ENCODE measurements at regions of chr7 and their contacts with region 1.

Region 1: GRCh38 chr7:1940402-1940786 is 270.3 kb downstream of the ELFN1 start:
- DNase-seq: peak; percentile 94 to 97 (median 95)
- H3K4me3 ChIP-seq: peak overlapping the region; percentile 79 to 97
- H3K4me3 Mint-ChIP-seq: peak overlapping the region; percentile 92 to 98 (median 96)
- H3K27ac ChIP-seq: peak overlapping the region; percentile 93
- H3K27ac Mint-ChIP-seq: peak overlapping the region; percentile 97 to 99 (median 99)
- H3K4me1 ChIP-seq: peaks cover 72% of the 10 kb centered on the region
- H3K4me1 Mint-ChIP-seq: peaks cover 33 to 77% (median 51%) of the 10 kb centered on the region in 4 donors
- H3K27me3 ChIP-seq: no peaks in the 10 kb centered on the region
- H3K27me3 Mint-ChIP-seq: no peaks in the 10 kb centered on the region

Region 2: GRCh38 chr7:1919539-1920265 is 20.7 kb before region 1 on chr7:
- CTCF ChIA-PET with region 1: interaction called, 3 read pairs
- POLR2A ChIA-PET with region 1: interaction called, 102 read pairs
- intact Hi-C with region 1: loop called (anchors 1 kb)
- DNase-seq: peak in 2 of 5 donors; percentile 24 to 29
- H3K4me3 ChIP-seq: peak overlapping the region; percentile 42 to 53
- H3K4me3 Mint-ChIP-seq: peak overlapping the region; percentile 84 to 91 (median 89)
- H3K27ac ChIP-seq: no peak overlapping the region
- H3K27ac Mint-ChIP-seq: peak overlapping the region; percentile 77 to 93 (median 89)
- H3K4me1 ChIP-seq: peaks cover 72% of the 10 kb centered on the region
- H3K4me1 Mint-ChIP-seq: peaks cover 38 to 72% (median 50%) of the 10 kb centered on the region in 4 donors
- H3K27me3 ChIP-seq: no peaks in the 10 kb centered on the region
- H3K27me3 Mint-ChIP-seq: no peaks in the 10 kb centered on the region

Region 3: DNA sequence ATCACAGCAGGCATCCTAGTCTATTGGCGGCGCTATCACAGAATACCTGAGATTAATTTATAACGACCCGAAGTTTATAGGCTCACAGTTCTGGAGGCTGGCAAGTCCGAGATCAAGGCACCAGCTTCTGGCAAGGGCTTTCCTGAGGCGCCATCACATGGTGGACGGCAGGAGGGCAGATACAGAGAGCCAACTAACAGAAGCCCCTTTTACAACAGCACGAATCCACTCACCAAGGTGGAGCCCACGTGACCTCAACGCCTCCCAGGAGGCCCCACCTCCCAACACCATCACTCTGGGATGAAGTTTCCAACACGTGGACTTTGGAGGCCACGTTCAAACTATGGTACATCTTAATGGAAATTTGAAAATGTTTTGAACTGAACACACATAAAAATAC is 15.0 kb before region 1 on chr7:
- CTCF ChIA-PET with region 1: interaction called, 14 read pairs
- POLR2A ChIA-PET with region 1: interaction called, 102 read pairs
- intact Hi-C with region 1: loop called (anchors 1 kb)
- DNase-seq: peak in 1 of 5 donors; percentile 24
- H3K4me3 ChIP-seq: no peak overlapping the region
- H3K4me3 Mint-ChIP-seq: peak overlapping the region; percentile 27 to 79 (median 62)
- H3K27ac ChIP-seq: peak overlapping the region; percentile 20
- H3K27ac Mint-ChIP-seq: peak overlapping the region; percentile 45 to 96 (median 92)
- H3K4me1 ChIP-seq: peaks cover 77% of the 10 kb centered on the region
- H3K4me1 Mint-ChIP-seq: peaks cover 56 to 82% (median 67%) of the 10 kb centered on the region in 4 donors
- H3K27me3 ChIP-seq: no peaks in the 10 kb centered on the region
- H3K27me3 Mint-ChIP-seq: no peaks in the 10 kb centered on the region

Region 4: GRCh38 chr7:1951159-1951536 is 10.8 kb after region 1 on chr7:
- CTCF ChIA-PET with region 1: no interaction called
- POLR2A ChIA-PET with region 1: interaction called, 14 read pairs
- intact Hi-C with region 1: no loop called
- DNase-seq: no peak
- H3K4me3 ChIP-seq: no peak overlapping the region
- H3K4me3 Mint-ChIP-seq: peak overlapping the region in 3 of 8 donors; percentile 34 to 54 (median 49)
- H3K27ac ChIP-seq: no peak overlapping the region
- H3K27ac Mint-ChIP-seq: peak overlapping the region in 2 of 7 donors; percentile 22 to 70
- H3K4me1 ChIP-seq: peaks cover 15% of the 10 kb centered on the region
- H3K4me1 Mint-ChIP-seq: peaks cover 6 to 17% (median 9%) of the 10 kb centered on the region in 4 donors
- H3K27me3 ChIP-seq: no peaks in the 10 kb centered on the region
- H3K27me3 Mint-ChIP-seq: no peaks in the 10 kb centered on the region

Region 5: DNA sequence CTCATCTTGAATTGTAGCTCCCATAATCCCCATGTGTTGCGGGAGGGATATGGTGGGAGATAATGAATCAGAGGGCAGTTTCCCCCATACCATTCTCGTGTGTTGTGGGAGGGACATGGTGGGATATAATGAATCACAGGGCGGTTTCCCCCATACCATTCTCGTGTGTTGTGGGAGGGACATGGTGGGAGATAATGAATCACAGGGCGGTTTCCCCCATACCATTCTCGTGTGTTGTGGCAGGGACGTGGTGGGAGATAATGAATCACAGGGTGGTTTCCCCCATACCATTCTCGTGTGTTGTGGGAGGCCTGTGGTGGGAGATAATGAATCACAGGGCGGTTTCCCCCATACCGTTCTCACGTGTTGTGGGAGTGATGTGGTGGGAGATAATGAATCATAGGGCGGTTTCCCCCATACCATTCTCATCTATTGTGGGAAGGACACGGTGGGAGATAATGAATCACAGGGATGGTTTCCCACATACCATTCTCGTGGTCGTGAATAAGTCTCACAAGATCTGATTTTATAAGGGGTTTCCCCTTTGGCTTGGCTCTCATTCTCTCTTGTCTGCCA is 21.4 kb after region 1 on chr7:
- CTCF ChIA-PET with region 1: no interaction called
- POLR2A ChIA-PET with region 1: no interaction called
- intact Hi-C with region 1: loop called (anchors 1 kb)
- DNase-seq: peak; percentile 46 to 82 (median 50)
- H3K4me3 ChIP-seq: no peak overlapping the region
- H3K4me3 Mint-ChIP-seq: peak overlapping the region in 3 of 8 donors; percentile 32 to 68 (median 49)
- H3K27ac ChIP-seq: no peak overlapping the region
- H3K27ac Mint-ChIP-seq: peak overlapping the region; percentile 46 to 90 (median 79)
- H3K4me1 ChIP-seq: no peaks in the 10 kb centered on the region
- H3K4me1 Mint-ChIP-seq: peaks cover 0 to 16% (median 10%) of the 10 kb centered on the region in 4 donors
- H3K27me3 ChIP-seq: no peaks in the 10 kb centered on the region
- H3K27me3 Mint-ChIP-seq: peaks cover 0 to 1% of the 10 kb centered on the region in 2 donors

Region 6: GRCh38 chr7:2232766-2233520 is 292.5 kb after region 1 on chr7 and contains the start of gene MAD1L1:
- CTCF ChIA-PET with region 1: no interaction called
- POLR2A ChIA-PET with region 1: no interaction called
- intact Hi-C with region 1: loop called (anchors 5 kb)
- DNase-seq: peak; percentile 86 to 88 (median 88)
- H3K4me3 ChIP-seq: peak within 1 kb of the TSS; percentile 95 to 98
- H3K4me3 Mint-ChIP-seq: peak within 1 kb of the TSS; percentile 87 to 99 (median 94)
- H3K27ac ChIP-seq: peak within 1 kb of the TSS; percentile 70
- H3K27ac Mint-ChIP-seq: peak within 1 kb of the TSS; percentile 76 to 97 (median 90)
- H3K4me1 ChIP-seq: peaks cover 32% of the 10 kb centered on the region
- H3K4me1 Mint-ChIP-seq: peaks cover 13 to 45% (median 32%) of the 10 kb centered on the region in 4 donors
- H3K27me3 ChIP-seq: no peaks in the 10 kb centered on the region
- H3K27me3 Mint-ChIP-seq: no peaks in the 10 kb centered on the region
- total RNA-seq, gene MAD1L1: 89.9 to 94.2 TPM

Measured in CD4-positive, alpha-beta memory T cell (primary cell).